ENCODE measurements at regions of chr5 and their contacts with region 1.

Region 1: GRCh38 chr5:148826053-148826738 is at the start of gene ADRB2:
- DNase-seq: peak; percentile 94 to 96
- ATAC-seq: peak; percentile 94 to 99 (median 97)
- H3K4me3 ChIP-seq: peak within 1 kb of the TSS; percentile 47 to 76 (median 68)
- H3K27ac ChIP-seq: peak within 1 kb of the TSS; percentile 77 to 97 (median 94)
- H3K4me1 ChIP-seq: peaks cover 0 to 82% (median 31%) of the 10 kb centered on the region in 9 donors
- H3K27me3 ChIP-seq: no peaks in the 10 kb centered on the region
- CTCF ChIP-seq: peak in 2 of 9 donors; percentile 4 to 17
- total RNA-seq, gene ADRB2: 3.5 to 7.8 (median 4.5) TPM

Region 2: DNA sequence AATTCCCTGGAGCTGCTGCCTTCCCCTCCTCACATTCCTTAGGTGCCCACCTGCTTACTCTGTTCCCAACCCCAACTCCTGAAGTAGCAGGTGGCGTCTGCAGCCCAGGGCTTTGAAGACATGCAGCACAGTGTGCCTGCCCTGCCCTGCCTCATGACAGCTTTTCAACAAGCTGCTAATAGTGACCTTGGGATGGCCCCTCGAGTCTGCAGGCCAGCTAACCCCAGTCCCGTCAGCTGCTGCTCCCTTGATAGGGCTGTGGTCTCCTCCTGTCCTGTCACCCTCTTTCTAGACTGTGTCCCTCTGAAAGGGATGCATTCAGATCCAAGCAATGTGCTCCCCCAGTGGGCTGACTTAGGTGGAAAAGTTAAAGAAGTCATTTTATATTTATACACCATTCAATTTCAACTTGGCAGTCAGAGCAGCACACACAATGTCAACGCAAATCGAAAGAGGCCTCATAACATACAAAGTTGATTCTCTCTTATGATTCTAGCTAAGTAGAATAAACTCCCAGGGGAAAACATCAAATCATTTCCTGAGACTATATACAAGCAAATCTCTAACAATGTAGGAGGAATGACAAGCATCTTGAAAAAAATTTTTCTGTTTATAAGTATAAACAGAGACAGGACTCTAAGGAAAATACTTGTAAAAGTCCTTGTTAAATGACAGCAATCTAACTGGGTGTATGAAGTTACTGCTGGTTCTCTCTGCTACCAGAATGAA is 38.1 kb after region 1 on chr5:
- intact Hi-C with region 1: loop called in 2 of 10 experiments (anchors 5 kb)
- DNase-seq: peak; percentile 32 to 35
- ATAC-seq: peak; percentile 60 to 89 (median 84)
- H3K4me3 ChIP-seq: no peak overlapping the region
- H3K27ac ChIP-seq: peak overlapping the region; percentile 32 to 86 (median 64)
- H3K4me1 ChIP-seq: peaks cover 0 to 39% (median 24%) of the 10 kb centered on the region in 9 donors
- H3K27me3 ChIP-seq: no peaks in the 10 kb centered on the region
- CTCF ChIP-seq: peak in 2 of 9 donors; percentile 7 to 13

Region 3: DNA sequence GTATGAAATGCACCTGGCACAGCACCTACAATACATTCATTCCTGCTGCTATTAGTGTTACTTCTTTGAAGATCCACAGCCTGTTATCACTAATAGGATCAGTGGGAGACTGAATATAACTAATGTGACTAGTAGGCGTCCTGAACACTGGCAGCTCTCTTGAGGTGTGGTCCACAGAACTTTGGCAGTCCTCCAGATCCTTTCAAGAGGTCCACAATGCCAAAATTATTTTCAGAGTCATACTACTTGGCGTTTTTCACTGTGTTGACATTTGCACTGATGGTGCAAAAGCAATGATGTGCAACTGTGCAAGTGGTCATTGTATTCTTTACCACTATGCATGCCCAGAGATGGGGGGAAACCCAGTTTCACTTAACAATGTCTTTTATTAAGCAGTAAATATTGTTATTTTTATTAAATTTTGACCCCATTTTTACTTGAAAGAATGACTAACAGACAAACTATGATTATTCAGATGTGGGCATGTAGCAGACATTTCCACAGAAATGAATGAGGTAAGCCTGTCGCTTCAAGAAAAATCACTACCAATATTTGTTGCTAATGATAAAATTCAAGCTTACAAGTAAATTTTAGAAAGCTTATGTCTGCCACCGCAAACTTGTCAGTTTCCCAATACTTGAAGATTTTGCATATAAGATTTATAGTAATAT is 49.1 kb after region 1 on chr5:
- intact Hi-C with region 1: loop called in 2 of 10 experiments (anchors 5 to 10 kb)
- DNase-seq: peak in 1 of 2 donors; percentile 45
- ATAC-seq: peak in 6 of 8 donors; percentile 60 to 83 (median 68)
- H3K4me3 ChIP-seq: no peak overlapping the region
- H3K27ac ChIP-seq: peak overlapping the region in 4 of 10 donors; percentile 53 to 72 (median 64)
- H3K4me1 ChIP-seq: peaks cover 11 to 35% (median 30%) of the 10 kb centered on the region in 9 donors
- H3K27me3 ChIP-seq: no peaks in the 10 kb centered on the region
- CTCF ChIP-seq: no peak

Region 4: GRCh38 chr5:148957591-148958202 is 131.5 kb after region 1 on chr5:
- intact Hi-C with region 1: loop called in 8 of 10 experiments (anchors 2 to 10 kb)
- DNase-seq: no peak
- ATAC-seq: peak in 4 of 8 donors; percentile 38 to 53 (median 46)
- H3K4me3 ChIP-seq: no peak overlapping the region
- H3K27ac ChIP-seq: no peak overlapping the region
- H3K4me1 ChIP-seq: peaks cover 0 to 9% (median 0%) of the 10 kb centered on the region in 9 donors
- H3K27me3 ChIP-seq: no peaks in the 10 kb centered on the region
- CTCF ChIP-seq: peak; percentile 68 to 87 (median 81)

Region 5: DNA sequence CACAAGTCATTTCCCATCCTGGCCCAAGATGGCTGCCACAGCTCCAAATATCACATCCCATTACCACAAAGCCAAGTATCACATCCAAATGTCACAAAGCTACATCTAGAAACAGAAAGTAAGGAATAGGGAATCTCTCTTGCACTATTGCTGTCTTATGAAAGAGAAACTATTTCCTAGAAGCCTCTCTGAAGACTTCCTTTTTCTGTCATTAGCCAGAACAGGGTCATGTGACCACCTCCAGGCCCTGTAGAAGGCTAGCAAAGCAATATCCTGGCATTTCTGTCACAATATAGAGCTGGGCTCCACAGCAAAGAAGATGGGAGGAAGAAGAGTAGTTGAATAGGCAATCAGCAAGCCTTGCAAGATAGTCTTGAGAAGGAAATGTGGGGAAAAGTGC is 137.5 kb after region 1 on chr5:
- intact Hi-C with region 1: loop called in 6 of 10 experiments (anchors 5 to 10 kb)
- DNase-seq: no peak
- ATAC-seq: no peak
- H3K4me3 ChIP-seq: no peak overlapping the region
- H3K27ac ChIP-seq: peak overlapping the region in 1 of 10 donors; percentile 82
- H3K4me1 ChIP-seq: peaks cover 3 to 41% (median 7%) of the 10 kb centered on the region in 9 donors
- H3K27me3 ChIP-seq: no peaks in the 10 kb centered on the region
- CTCF ChIP-seq: no peak

Region 6: DNA sequence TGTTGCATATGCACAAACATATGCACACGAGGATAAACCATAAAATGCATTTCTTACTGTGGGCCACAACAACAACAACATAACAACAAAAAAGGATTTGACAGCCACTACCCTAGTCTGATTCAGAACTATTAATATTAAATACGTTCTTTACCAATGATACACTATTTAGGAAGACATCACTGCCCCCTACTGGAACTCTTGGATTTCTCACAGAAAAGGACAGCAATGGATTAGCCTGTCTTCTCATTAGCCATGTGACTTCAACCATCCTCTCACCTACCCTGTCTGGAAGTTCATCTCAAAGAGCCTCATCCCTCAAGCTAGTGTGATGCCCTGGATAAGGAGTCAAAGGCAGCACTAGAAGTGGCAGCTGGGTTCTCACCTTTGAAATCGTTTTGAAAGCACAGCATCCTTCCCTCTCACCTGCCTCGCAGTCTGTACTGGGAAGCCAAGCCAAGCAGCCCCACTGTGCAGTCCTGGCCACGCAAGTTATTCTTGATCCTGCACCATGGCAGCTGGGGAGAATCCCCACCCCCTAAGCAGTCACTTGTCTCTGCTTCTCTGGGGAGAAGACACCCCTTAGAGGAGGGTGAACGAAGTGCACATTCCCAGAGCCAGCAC is 172.1 kb after region 1 on chr5:
- intact Hi-C with region 1: loop called in 4 of 10 experiments (anchors 5 to 10 kb)
- DNase-seq: peak in 1 of 2 donors; percentile 49
- ATAC-seq: peak in 7 of 8 donors; percentile 39 to 66 (median 53)
- H3K4me3 ChIP-seq: no peak overlapping the region
- H3K27ac ChIP-seq: no peak overlapping the region
- H3K4me1 ChIP-seq: peaks cover 0 to 35% (median 9%) of the 10 kb centered on the region in 9 donors
- H3K27me3 ChIP-seq: no peaks in the 10 kb centered on the region
- CTCF ChIP-seq: peak; percentile 42 to 77 (median 69)

Measured in heart right ventricle (tissue), 16 donors.